Endothelial cell of umbilical vein (primary cell): ENCODE measurements at regions of chr11 and their contacts with region 1.

Region 1: DNA sequence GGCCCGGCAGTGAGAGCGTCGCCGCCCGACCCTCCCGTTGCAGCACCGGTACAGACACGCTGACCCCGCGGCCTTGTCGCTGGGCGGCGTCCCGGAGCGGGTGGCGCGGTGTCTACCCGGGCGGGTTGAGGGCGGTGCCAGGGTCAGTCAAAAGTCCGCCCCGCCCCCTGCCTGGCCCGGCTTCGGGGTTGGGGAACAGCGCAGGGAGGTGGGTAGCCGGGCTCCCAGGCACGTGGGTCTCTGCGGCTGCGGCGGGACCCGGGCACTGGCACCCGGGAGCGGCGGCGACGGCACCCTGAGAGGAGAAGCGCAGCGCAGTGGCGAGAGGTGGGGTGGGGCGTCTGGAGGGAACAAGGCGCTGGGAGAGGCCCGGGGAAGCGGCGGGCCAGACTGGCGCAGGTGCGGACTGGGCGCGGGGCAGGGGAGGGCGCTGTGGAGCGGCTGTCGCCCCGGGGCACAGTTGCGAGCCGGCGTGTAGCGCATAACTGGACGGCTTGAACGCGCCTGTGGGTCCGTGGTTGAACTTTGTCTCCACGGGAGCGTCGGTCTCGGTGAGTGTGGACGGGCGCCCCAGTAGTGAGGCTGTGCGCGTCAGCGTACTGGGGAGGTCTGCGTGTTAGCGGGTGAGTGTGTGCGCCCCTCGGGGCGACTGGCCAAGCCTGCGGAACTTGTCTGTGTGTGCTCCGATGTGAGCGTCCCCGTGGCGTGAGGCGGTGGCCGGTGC is at the start of gene P2RY2:
- DNase-seq: peak; percentile 59
- H3K4me3 ChIP-seq: peak within 1 kb of the TSS in 2 of 3 experiments; percentile 0 to 30
- H3K27ac ChIP-seq: no peak within 1 kb of the TSS
- H3K4me1 ChIP-seq: no peaks in the 10 kb centered on the region
- H3K27me3 ChIP-seq: no peaks in the 10 kb centered on the region
- CTCF ChIP-seq: peak; percentile 58 to 75
- POLR2A ChIP-seq: no peak
- total RNA-seq, gene P2RY2: 4.4 and 5.6 TPM in 2 replicates

Region 2: DNA sequence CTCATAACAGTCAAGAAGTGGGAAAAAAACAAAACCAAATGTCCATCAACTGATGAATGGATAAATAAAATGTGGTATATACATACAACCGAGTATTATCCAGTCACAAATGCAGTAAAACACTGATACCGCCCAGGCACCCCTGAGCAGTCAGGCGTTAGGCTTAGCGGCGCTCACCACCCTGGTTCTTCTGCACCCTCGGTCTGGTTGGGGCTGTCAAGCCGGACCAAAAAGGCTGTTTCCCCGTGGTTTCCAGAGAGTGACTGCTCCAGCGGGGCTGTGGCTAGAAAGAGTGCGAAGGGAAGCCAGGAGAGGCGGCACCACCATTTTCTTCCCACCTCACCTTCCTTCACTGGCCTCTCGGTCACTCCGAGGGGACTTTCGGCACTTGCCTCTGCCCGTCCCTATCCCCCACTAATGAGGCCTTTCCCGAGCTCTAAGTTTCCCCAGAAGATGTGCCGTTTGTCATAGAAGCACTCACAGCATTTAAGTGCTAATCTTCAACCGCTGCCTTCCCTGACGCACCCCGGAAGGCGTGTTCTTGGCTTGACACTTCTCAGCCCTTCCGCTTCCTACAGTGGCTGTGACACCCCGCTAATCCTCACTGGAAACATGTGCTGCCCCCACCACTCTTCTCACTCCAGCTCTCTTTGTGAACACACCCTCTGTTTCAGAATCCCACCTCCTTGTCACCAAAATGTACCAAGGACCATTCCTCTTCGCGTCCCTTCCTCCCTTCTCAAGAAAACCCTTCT is 118.6 kb before region 1 on chr11:
- CTCF ChIA-PET with region 1: no interaction called
- POLR2A ChIA-PET with region 1: no interaction called
- dilution Hi-C with region 1: no loop called
- intact Hi-C with region 1: no loop called
- DNase-seq: no peak
- H3K4me3 ChIP-seq: no peak overlapping the region
- H3K27ac ChIP-seq: no peak overlapping the region
- H3K4me1 ChIP-seq: peaks cover 5% of the 10 kb centered on the region
- H3K27me3 ChIP-seq: no peaks in the 10 kb centered on the region
- CTCF ChIP-seq: no peak
- POLR2A ChIP-seq: no peak

Region 3: GRCh38 chr11:73206801-73207200 is 11.5 kb before region 1 on chr11:
- CTCF ChIA-PET with region 1: interaction called, 11 read pairs
- POLR2A ChIA-PET with region 1: no interaction called
- dilution Hi-C with region 1: no loop called
- intact Hi-C with region 1: no loop called
- DNase-seq: no peak
- H3K4me3 ChIP-seq: no peak overlapping the region
- H3K27ac ChIP-seq: no peak overlapping the region
- H3K4me1 ChIP-seq: no peaks in the 10 kb centered on the region
- H3K27me3 ChIP-seq: no peaks in the 10 kb centered on the region
- CTCF ChIP-seq: no peak
- POLR2A ChIP-seq: no peak

Region 4: GRCh38 chr11:73236854-73237253 is 18.6 kb after region 1 on chr11:
- CTCF ChIA-PET with region 1: interaction called, 18 read pairs
- POLR2A ChIA-PET with region 1: no interaction called
- dilution Hi-C with region 1: no loop called
- intact Hi-C with region 1: loop called (anchors 1 kb)
- DNase-seq: peak; percentile 61
- H3K4me3 ChIP-seq: no peak overlapping the region
- H3K27ac ChIP-seq: no peak overlapping the region
- H3K4me1 ChIP-seq: peaks cover 7% of the 10 kb centered on the region
- H3K27me3 ChIP-seq: no peaks in the 10 kb centered on the region
- CTCF ChIP-seq: peak; percentile 65 to 81
- POLR2A ChIP-seq: no peak

Region 5: GRCh38 chr11:73242251-73243079 is 24.2 kb after region 1 on chr11:
- CTCF ChIA-PET with region 1: interaction called, 18 read pairs
- POLR2A ChIA-PET with region 1: no interaction called
- dilution Hi-C with region 1: no loop called
- intact Hi-C with region 1: loop called (anchors 1 kb)
- DNase-seq: peak; percentile 84
- H3K4me3 ChIP-seq: no peak overlapping the region
- H3K27ac ChIP-seq: no peak overlapping the region
- H3K4me1 ChIP-seq: peaks cover 11% of the 10 kb centered on the region
- H3K27me3 ChIP-seq: no peaks in the 10 kb centered on the region
- CTCF ChIP-seq: peak; percentile 88 to 89
- POLR2A ChIP-seq: no peak

Region 6: DNA sequence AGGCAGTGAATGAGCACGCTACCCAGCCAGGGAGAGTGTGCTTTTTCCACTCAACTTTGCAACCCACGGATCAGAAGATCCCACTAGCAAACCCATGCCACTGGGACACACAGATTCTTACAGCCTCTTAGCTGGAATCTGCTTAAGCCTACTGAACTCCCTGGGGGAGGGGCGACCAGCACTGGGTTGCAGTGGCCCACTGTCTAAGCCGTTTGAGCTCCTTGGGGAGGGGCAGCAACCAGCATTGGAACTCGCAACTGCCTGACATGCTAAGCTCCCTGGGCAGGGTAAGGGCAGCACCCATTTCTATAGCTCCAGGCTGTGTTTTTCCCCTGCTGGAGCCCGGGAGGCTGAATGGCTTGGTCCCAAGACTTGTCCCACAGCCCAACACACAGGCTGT is 280.1 kb after region 1 on chr11:
- CTCF ChIA-PET with region 1: no interaction called
- POLR2A ChIA-PET with region 1: no interaction called
- dilution Hi-C with region 1: no loop called
- intact Hi-C with region 1: no loop called
- DNase-seq: no peak
- H3K4me3 ChIP-seq: no peak overlapping the region
- H3K27ac ChIP-seq: no peak overlapping the region
- H3K4me1 ChIP-seq: no peaks in the 10 kb centered on the region
- H3K27me3 ChIP-seq: no peaks in the 10 kb centered on the region
- CTCF ChIP-seq: no peak
- POLR2A ChIP-seq: no peak